ENCODE measurements at regions of chr11 and their contacts with region 1.

Region 1: GRCh38 chr11:130213143-130213978 is 53.8 kb downstream of the ST14 start:
- DNase-seq: peak; percentile 86
- CTCF ChIP-seq: peak; percentile 94

Region 2: DNA sequence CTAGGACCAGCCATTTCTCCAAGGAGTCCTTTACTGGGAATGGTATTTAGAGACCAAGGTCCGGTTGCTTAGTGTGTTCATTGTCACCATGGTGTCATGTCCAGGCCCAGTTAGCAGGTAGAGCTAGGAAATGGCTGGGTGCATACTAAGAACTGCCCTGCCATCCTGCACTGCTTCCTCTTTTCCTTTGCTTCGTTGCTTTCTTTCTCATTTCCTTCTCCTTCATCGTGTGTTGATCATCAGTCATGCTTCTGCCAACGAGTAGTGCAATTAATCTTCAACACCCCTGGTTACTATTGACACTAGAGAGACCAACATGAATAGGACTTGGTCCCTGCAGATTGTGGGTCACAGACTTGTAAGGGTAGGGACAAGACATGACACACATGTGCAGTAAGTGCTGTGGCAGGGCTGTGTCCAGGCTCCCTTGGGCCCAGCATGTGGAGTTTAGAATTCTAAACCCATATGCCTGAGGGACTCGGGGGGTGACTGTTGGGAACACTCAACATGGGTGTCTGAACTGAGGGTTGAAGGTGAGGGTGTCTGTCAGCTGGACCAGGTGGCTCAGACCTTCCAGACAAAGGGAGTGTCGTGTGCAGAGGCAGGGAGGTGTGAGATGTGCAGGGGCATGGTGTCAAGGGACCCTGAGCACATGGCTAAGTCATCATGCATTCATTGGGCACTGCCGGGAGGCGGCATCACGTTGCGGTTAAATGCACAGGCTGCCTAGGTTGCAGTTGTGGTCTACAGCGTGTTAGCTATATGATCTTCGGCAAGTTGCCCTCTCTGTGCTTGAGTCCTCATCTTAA is 11.1 kb before region 1 on chr11:
- CTCF ChIA-PET with region 1: interaction called, 15 read pairs
- POLR2A ChIA-PET with region 1: no interaction called
- DNase-seq: no peak
- CTCF ChIP-seq: no peak

Region 3: GRCh38 chr11:130227373-130227772 is 14.0 kb after region 1 on chr11:
- CTCF ChIA-PET with region 1: interaction called, 18 read pairs
- POLR2A ChIA-PET with region 1: no interaction called
- DNase-seq: no peak
- CTCF ChIP-seq: no peak

Region 4: GRCh38 chr11:130370845-130371590 is 157.7 kb after region 1 on chr11:
- CTCF ChIA-PET with region 1: interaction called, 13 read pairs
- POLR2A ChIA-PET with region 1: no interaction called
- DNase-seq: peak; percentile 36
- CTCF ChIP-seq: peak; percentile 25

Measured in GM10248 (cell line).